H1 (cell line): ENCODE measurements at regions of chr22 and their contacts with region 1.

Region 1: GRCh38 chr22:31451709-31452571 is 37.7 kb downstream of the EIF4ENIF1 start:
- DNase-seq: no peak
- H3K4me3 ChIP-seq: no peak overlapping the region
- H3K27ac ChIP-seq: no peak overlapping the region
- H3K4me1 ChIP-seq: no peaks in the 10 kb centered on the region
- H3K27me3 ChIP-seq: peaks cover 0 to 1% (median 0%) of the 10 kb centered on the region in 4 experiments; a peak in 1 of 7 replicates
- CTCF ChIP-seq: peak in 2 of 3 experiments; percentile 49 to 66; a peak in 3 of 4 replicates
- EP300 ChIP-seq: no peak
- POLR2A ChIP-seq: no peak
- RAD21 ChIP-seq: peak; percentile 29 to 46; a peak in 3 of 4 replicates

Region 2: GRCh38 chr22:31439808-31440207 is 12.1 kb before region 1 on chr22:
- CTCF ChIA-PET with region 1: interaction called, 18 read pairs
- POLR2A ChIA-PET with region 1: interaction called, 23 read pairs
- DNase-seq: no peak
- H3K4me3 ChIP-seq: no peak overlapping the region
- H3K27ac ChIP-seq: no peak overlapping the region
- H3K4me1 ChIP-seq: no peaks in the 10 kb centered on the region
- H3K27me3 ChIP-seq: no peaks in the 10 kb centered on the region
- CTCF ChIP-seq: no peak
- EP300 ChIP-seq: no peak
- POLR2A ChIP-seq: no peak
- RAD21 ChIP-seq: no peak

Region 3: GRCh38 chr22:31474743-31475142 is 22.8 kb after region 1 on chr22:
- CTCF ChIA-PET with region 1: interaction called, 11 read pairs
- POLR2A ChIA-PET with region 1: no interaction called
- DNase-seq: no peak
- H3K4me3 ChIP-seq: no peak overlapping the region
- H3K27ac ChIP-seq: no peak overlapping the region
- H3K4me1 ChIP-seq: no peaks in the 10 kb centered on the region
- H3K27me3 ChIP-seq: no peaks in the 10 kb centered on the region
- CTCF ChIP-seq: no peak
- EP300 ChIP-seq: no peak
- POLR2A ChIP-seq: no peak
- RAD21 ChIP-seq: no peak

Region 4: DNA sequence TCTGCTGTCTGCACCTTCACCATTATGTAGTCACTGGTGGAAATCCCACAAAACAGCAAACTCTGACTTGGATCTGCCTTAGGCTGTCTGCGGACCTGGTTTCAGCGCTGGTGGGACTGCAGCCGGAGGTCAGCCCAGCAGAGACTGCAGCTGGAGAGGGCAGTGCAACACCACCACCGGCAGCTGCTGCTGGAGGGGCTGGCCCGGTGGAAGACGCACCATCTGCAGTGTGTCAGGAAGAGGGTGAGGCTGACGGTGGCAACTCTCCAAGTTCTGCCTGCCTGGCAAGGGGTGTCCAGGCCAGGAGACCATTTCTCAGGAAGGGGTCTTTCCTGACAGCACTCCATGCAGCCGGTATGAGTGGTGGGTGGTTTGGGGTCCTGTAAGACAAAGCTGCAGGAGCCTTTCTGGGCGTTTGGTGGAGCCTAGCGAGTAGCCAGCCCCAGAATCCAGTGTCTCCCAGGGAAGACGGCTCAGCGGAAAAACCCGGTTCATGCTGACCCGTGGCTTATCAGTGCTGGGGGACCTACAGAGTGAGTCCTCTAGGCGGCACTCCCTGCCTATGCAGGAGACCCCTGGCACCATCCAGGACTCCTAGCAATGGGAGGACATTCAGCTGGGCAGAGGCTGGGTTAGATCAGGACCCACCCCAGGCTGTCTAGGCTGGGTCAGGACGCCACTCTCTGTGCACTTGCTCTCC is 159.3 kb after region 1 on chr22:
- CTCF ChIA-PET with region 1: no interaction called
- POLR2A ChIA-PET with region 1: no interaction called
- DNase-seq: no peak
- H3K4me3 ChIP-seq: no peak overlapping the region
- H3K27ac ChIP-seq: no peak overlapping the region
- H3K4me1 ChIP-seq: no peaks in the 10 kb centered on the region; a peak in 1 of 7 replicates
- H3K27me3 ChIP-seq: no peaks in the 10 kb centered on the region
- CTCF ChIP-seq: peak; percentile 6 to 19 (median 16); a peak in 2 of 4 replicates
- EP300 ChIP-seq: no peak
- POLR2A ChIP-seq: no peak
- RAD21 ChIP-seq: peak; percentile 42 to 54; a peak in 3 of 4 replicates

Region 5: DNA sequence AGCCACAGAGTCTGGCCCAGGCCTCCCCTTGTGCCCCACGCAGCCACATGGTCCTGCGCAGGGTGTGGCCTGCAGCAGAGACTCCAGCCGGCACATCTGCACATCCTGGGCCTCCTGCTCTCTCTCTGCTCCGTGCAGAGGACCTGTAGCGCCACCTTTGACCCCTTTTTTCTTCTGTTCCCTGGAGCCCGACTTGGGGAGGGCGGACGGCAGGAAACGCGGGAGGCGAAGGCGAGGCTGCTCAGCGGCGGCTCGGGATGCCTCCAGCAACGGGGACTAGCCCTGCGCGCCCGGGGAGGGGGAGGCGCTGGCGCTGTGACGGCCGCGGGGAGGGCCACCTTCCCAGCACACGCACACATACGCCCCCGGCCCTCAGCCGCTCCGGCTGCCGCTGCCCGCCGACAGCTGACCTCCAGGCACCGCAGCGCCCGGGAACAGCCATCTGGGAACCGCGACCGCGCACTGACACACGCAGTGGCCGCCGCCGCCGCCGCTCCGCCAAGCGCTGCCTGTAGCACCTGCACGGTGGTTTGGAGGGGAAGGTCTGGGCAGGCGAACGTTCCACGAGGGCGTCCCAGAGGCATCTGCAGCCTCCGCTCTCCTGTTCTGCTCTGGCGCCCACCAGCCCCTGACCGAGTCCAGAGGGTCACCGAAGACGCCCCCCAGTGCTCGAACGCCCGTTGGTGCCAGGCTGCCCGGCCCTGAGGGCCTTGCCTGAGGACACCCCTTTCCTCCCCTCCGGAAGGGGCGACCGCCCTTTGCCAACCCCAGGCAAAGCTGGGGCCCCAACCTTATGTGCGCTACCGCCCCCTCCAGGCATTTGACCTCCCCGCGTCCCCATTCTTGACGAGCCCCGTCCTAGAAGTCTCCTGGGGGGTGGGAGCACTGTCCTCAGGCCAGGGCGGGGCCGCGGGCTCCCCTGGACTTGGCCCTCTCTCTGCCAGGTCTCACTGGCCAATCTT is 724.0 kb after region 1 on chr22:
- CTCF ChIA-PET with region 1: no interaction called
- POLR2A ChIA-PET with region 1: no interaction called
- DNase-seq: peak in 1 of 2 experiments; percentile 80
- H3K4me3 ChIP-seq: peak overlapping the region; percentile 17 to 55 (median 32)
- H3K27ac ChIP-seq: no peak overlapping the region
- H3K4me1 ChIP-seq: peaks cover 0 to 13% (median 0%) of the 10 kb centered on the region in 4 experiments; a peak in 4 of 7 replicates
- H3K27me3 ChIP-seq: peaks cover 0 to 28% (median 21%) of the 10 kb centered on the region in 4 experiments; a peak in 6 of 7 replicates
- CTCF ChIP-seq: peak; percentile 2 to 42 (median 26); a peak in 3 of 4 replicates
- EP300 ChIP-seq: no peak
- POLR2A ChIP-seq: no peak
- RAD21 ChIP-seq: peak in 1 of 2 experiments; percentile 17; a peak in 2 of 4 replicates